HCT116 (cell line): ENCODE measurements at regions of chr22 and their contacts with region 1.

Region 1: GRCh38 chr22:29040385-29041275 is 21.0 kb downstream of the C22orf31 start:
- DNase-seq: peak; percentile 73
- ATAC-seq: peak; percentile 88
- H3K4me3 ChIP-seq: no peak overlapping the region
- H3K27ac ChIP-seq: no peak overlapping the region
- H3K4me1 ChIP-seq: peaks cover 25 to 34% of the 10 kb centered on the region in 2 experiments
- H3K27me3 ChIP-seq: no peaks in the 10 kb centered on the region
- CTCF ChIP-seq: peak; percentile 84 to 99 (median 96)
- POLR2A ChIP-seq: no peak
- RAD21 ChIP-seq: peak; percentile 91

Region 2: DNA sequence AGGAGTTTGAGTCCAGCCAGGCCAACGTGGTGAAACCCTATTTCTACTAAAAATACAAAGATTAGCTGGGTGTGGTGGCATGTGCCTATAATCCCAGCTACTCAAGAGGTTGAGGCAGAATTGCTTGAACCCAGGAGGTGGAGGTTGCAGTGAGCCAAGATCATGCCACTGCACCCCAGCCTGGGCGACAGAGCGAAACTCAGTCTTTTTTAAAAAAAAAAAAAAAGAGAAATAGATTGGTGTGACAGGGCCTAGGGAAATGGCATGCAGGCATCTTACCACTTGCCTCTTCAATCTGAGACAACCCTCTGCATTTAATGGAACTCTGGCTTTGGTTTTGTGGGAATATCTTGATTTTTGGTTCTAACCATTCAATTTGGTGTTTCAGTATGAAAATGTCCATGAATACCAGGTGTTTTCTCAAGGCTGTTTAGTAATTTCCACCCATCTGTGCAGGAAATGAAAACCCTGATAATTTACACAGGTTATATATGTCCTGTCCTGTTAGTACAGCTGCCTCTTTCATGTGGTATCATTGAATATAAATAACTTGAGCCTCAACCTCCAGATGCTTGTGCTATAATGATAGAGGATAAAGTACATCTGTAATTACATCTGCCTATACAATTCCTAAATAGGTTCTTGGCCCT is 248.7 kb before region 1 on chr22:
- CTCF ChIA-PET with region 1: interaction called, 15 read pairs
- POLR2A ChIA-PET with region 1: no interaction called
- RAD21 ChIA-PET with region 1: no interaction called
- intact Hi-C with region 1: loop called (anchors 5 kb)
- DNase-seq: no peak
- ATAC-seq: no peak
- H3K4me3 ChIP-seq: no peak overlapping the region
- H3K27ac ChIP-seq: no peak overlapping the region
- H3K4me1 ChIP-seq: no peaks in the 10 kb centered on the region
- H3K27me3 ChIP-seq: no peaks in the 10 kb centered on the region
- CTCF ChIP-seq: no peak
- POLR2A ChIP-seq: no peak
- RAD21 ChIP-seq: no peak

Region 3: GRCh38 chr22:28829358-28830181 is 211.1 kb before region 1 on chr22:
- CTCF ChIA-PET with region 1: interaction called, 20 read pairs
- POLR2A ChIA-PET with region 1: no interaction called
- RAD21 ChIA-PET with region 1: interaction called in 1 of 2 experiments, 3 read pairs
- intact Hi-C with region 1: loop called (anchors 1 kb)
- DNase-seq: peak; percentile 36
- ATAC-seq: peak; percentile 92
- H3K4me3 ChIP-seq: no peak overlapping the region
- H3K27ac ChIP-seq: no peak overlapping the region
- H3K4me1 ChIP-seq: no peaks in the 10 kb centered on the region
- H3K27me3 ChIP-seq: no peaks in the 10 kb centered on the region
- CTCF ChIP-seq: peak; percentile 70 to 99 (median 98)
- POLR2A ChIP-seq: no peak
- RAD21 ChIP-seq: peak; percentile 88

Region 4: DNA sequence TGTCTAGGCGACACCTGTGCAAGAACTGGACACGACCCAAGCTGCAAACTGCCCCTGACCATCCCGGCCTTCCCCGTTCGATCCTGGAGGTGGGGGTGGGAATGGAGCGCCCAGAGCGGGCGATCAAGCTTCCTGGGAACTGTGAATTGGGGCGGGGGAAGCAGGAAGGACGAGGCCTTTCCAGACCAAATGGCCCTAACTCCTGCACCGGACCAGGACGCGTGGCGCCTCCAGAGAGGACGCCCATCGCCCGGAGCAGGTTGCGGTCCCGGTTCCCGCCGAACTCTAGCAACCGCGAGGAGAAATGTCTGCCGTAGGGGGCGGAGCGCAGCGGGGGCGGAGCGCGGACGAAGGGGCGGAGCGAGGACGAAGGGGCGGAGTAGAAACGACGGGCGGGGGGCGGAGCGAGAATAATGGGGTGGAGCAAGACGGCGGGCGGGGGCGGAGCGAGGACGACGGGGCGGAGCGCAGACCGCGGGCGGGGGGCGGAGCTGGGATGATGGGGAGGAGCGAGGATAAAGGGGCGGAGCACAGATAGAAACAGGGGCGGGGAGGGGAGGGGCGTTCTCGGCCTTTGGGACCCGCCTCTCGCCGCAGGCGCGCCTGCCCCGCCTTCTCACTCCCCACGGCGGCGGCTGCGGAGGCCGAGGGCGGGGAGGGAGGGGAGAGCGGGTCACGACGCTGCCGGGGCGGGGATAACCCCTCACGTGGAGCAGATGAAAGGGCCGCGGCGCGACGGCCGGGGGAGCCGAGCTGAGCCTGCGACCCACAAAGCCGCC is 157.6 kb before region 1 on chr22 and contains the start of gene ZNRF3:
- CTCF ChIA-PET with region 1: interaction called, 14 read pairs
- POLR2A ChIA-PET with region 1: no interaction called
- RAD21 ChIA-PET with region 1: interaction called in 1 of 2 experiments, 3 read pairs
- intact Hi-C with region 1: no loop called
- DNase-seq: peak; percentile 83
- ATAC-seq: peak; percentile 85
- H3K4me3 ChIP-seq: peak within 1 kb of the TSS; percentile 66 to 80
- H3K27ac ChIP-seq: peak within 1 kb of the TSS; percentile 77
- H3K4me1 ChIP-seq: peaks cover 19 to 24% of the 10 kb centered on the region in 2 experiments
- H3K27me3 ChIP-seq: no peaks in the 10 kb centered on the region
- CTCF ChIP-seq: no peak
- POLR2A ChIP-seq: peak; percentile 29
- RAD21 ChIP-seq: no peak
- total RNA-seq, gene ZNRF3: 12.2 TPM

Region 5: DNA sequence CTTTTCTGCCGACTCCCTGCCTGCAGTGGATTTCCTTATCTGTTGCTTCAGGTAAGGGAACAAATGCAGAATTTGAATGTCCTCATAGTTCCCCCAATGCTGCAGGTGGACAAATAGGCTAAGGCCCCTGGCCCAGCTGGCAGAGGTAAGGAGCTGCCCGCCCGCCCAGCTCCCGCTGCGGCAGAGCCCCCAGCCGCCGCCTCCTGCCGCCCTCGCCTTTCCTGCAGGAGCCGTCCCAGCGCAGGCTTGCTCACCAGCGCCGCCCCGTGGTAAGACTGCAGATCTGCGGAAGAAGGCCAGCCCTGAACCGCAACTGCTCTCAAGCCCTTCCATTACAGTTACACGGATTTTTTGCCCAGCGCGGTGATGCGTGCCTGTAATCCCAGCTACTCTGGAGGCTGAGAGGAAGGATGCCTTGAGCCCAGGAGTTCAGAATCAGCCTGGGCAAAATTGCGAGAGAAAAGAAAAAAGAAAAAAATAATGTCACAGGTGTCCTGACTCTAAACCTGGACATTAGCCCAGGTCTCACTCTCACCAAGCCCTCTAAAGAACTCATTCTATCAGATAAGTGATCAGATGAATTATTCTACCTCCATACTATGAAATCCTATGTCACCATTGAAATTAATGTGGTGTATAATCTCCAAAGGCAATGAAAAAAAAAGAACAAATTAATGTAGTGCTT is 113.9 kb after region 1 on chr22:
- CTCF ChIA-PET with region 1: interaction called, 10 read pairs
- POLR2A ChIA-PET with region 1: no interaction called
- RAD21 ChIA-PET with region 1: interaction called in 1 of 2 experiments, 9 read pairs
- intact Hi-C with region 1: no loop called
- DNase-seq: peak; percentile 34
- ATAC-seq: peak; percentile 92
- H3K4me3 ChIP-seq: peak overlapping the region; percentile 9 to 17; a peak in 3 of 4 replicates
- H3K27ac ChIP-seq: no peak overlapping the region
- H3K4me1 ChIP-seq: peaks cover 3 to 8% of the 10 kb centered on the region in 2 experiments; a peak in 2 of 4 replicates
- H3K27me3 ChIP-seq: no peaks in the 10 kb centered on the region
- CTCF ChIP-seq: peak; percentile 75 to 94 (median 93)
- POLR2A ChIP-seq: no peak
- RAD21 ChIP-seq: peak; percentile 82